ENCODE measurements at regions of chr11 and their contacts with region 1.

Region 1: DNA sequence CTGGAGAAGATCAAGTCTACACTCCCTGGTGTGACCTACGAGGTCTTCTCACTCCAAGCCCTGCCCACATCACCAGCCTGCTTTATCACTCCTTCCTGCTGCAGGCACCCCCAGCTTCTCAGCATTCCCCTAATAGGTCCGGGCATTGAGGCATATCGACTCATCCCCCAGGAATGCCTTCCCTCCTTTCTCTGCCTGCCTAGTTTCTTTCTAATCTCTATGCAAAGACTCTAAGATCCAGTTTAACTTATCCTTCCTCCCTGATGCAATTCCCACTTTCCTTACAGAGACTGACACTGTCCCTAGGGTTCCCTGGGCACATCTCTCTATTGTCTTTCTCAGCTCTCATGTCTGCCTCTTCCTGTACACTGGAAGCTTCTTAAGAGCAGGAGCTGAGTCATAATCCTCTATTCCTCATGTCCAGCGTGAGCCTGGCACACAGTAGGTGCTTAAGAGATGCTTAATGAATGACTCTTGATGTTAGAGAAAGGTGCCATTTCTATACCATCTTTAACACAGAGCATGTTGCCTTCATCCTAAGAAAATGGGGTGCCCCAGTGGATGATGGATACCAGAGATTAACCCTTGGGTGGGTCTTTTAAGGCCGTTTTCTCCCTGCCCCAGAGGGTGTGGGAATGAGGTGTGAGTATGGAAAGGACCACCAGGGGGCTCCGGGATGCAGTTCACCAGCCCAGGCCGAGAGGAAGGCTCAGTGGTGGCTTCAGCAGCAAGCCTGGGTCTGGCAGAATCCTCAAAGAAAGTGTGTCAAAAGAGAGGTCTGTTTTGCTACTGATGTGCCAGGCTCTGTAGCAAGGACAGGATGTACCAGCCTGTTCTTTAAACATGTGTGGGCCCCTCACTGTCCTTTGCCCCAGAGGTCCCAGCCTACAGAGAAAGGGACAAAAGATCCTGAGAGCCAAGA is 34.7 kb downstream of the PARVA start:
- DNase-seq: peak; percentile 82
- H3K4me3 ChIP-seq: no peak overlapping the region
- H3K27ac ChIP-seq: peak overlapping the region; percentile 85
- H3K4me1 ChIP-seq: peaks cover 17% of the 10 kb centered on the region
- H3K27me3 ChIP-seq: no peaks in the 10 kb centered on the region
- CTCF ChIP-seq: peak; percentile 88 to 90
- POLR2A ChIP-seq: peak; percentile 19

Region 2: GRCh38 chr11:12485328-12485727 is 73.3 kb after region 1 on chr11:
- CTCF ChIA-PET with region 1: interaction called, 41 read pairs
- POLR2A ChIA-PET with region 1: no interaction called
- dilution Hi-C with region 1: no loop called
- intact Hi-C with region 1: no loop called
- DNase-seq: peak; percentile 14
- H3K4me3 ChIP-seq: no peak overlapping the region
- H3K27ac ChIP-seq: no peak overlapping the region
- H3K4me1 ChIP-seq: no peaks in the 10 kb centered on the region
- H3K27me3 ChIP-seq: no peaks in the 10 kb centered on the region
- CTCF ChIP-seq: peak; percentile 31 to 37
- POLR2A ChIP-seq: no peak